Dorsolateral prefrontal cortex (tissue), 120 donors: ENCODE measurements at regions of chr10 and their contacts with region 1.

Region 1: GRCh38 chr10:43436400-43437140 is at the start of gene ZNF487:
- DNase-seq: peak; percentile 72 to 93 (median 84)
- H3K4me3 ChIP-seq: peak within 1 kb of the TSS; percentile 61 to 99 (median 92)
- H3K27ac ChIP-seq: peak within 1 kb of the TSS; percentile 87 to 100 (median 98)
- H3K27me3 ChIP-seq: no peaks in the 10 kb centered on the region
- CTCF ChIP-seq: peak in 47 of 56 donors; percentile 12 to 66 (median 36)
- total RNA-seq, gene ZNF487: 12.0 to 31.9 (median 20.8) TPM

Region 2: GRCh38 chr10:43128958-43129706 is 307.4 kb before region 1 on chr10:
- intact Hi-C with region 1: no loop called
- DNase-seq: peak in 1 of 10 donors; percentile 46
- H3K4me3 ChIP-seq: no peak overlapping the region
- H3K27ac ChIP-seq: peak overlapping the region in 3 of 59 donors; percentile 31 to 58 (median 43)
- H3K27me3 ChIP-seq: no peaks in the 10 kb centered on the region
- CTCF ChIP-seq: no peak

Region 3: GRCh38 chr10:43396928-43397624 is 39.5 kb before region 1 on chr10:
- intact Hi-C with region 1: loop called (anchors 5 kb)
- DNase-seq: peak; percentile 75 to 90 (median 85)
- H3K4me3 ChIP-seq: peak overlapping the region; percentile 55 to 91 (median 80)
- H3K27ac ChIP-seq: peak overlapping the region; percentile 81 to 99 (median 97)
- H3K27me3 ChIP-seq: no peaks in the 10 kb centered on the region
- CTCF ChIP-seq: peak in 16 of 56 donors; percentile 7 to 38 (median 15)

Region 4: DNA sequence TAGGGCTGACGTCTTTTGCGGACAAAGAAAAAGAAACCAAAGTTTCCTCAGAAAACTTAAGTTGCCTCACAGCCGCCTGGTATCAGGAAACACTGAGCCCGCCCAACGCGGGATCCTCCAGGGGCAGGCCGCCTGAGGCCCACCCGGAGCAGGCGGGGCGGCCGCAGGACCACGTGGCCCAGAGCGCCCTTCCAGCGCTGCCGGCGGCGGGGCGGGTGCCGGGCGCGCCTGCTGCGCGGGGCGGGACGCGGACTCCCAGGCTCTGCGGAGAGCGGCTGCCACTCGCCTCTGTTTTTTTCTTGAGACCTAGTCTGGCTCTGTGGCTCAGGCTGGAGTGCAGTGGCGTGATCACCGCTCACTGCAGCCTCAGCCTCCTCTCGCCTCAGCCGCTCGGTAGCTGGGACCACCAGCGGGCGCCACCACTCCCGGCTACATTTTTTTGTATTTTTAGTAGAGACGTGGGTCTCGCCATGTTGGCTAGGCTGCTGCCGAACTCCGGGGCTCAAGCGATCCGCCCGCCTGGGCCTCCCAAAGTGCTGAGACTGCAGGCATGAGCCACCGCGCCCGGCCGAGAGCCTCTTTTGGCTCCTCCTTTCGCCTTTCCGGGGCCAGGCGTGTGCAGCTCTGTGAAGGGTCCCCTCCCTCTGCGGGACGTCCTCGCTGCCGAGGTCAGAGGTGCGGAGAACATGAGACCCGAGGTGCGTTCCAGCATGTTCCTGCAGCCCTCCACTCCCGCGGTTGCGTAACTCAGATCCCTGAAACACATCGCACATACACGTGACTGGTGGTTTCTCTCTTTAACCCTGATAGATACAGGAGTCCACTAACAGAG is 16.0 kb before region 1 on chr10:
- intact Hi-C with region 1: loop called (anchors 2 kb)
- DNase-seq: peak; percentile 65 to 93 (median 80)
- H3K4me3 ChIP-seq: peak overlapping the region; percentile 47 to 88 (median 74)
- H3K27ac ChIP-seq: peak overlapping the region; percentile 94 to 100 (median 99)
- H3K27me3 ChIP-seq: no peaks in the 10 kb centered on the region
- CTCF ChIP-seq: peak in 50 of 56 donors; percentile 6 to 66 (median 47)